ENCODE measurements at regions of chrX and their contacts with region 1.

Region 1: DNA sequence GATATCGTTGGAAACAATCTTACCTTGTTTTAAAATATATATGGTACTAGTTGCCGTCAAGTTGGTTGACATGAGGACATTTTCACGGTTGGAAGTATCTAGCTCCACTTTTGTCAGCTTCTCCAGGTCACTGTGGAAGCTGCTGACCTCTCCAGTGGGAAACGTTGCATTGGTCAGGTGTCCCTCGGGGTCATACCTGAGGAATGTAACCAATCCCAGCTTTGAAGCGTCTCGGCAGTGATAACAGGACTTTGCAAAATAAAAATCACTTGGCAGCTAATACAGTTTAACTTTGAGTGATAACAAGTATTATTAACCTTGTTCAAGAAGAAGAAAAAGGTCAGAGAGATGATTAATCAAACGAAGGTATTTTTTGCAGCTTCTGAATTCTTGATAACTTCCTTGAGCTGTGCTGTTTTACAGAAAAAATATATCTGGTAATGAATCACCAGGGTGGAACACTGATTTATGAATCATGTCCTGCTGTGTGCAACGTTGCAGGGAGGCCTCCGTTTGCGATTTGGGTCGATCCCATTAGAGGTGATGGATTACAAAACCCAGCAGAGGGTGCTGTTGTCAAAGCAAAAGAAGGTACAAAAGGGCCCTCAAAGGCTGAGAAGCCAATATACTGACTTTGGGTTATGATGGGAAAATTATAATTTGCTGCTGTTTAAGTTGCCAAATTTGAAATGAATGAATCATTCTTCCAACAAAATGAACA is 60.1 kb downstream of the SH2D1A start:
- DNase-seq: peak; percentile 36
- CTCF ChIP-seq: peak; percentile 44

Region 2: DNA sequence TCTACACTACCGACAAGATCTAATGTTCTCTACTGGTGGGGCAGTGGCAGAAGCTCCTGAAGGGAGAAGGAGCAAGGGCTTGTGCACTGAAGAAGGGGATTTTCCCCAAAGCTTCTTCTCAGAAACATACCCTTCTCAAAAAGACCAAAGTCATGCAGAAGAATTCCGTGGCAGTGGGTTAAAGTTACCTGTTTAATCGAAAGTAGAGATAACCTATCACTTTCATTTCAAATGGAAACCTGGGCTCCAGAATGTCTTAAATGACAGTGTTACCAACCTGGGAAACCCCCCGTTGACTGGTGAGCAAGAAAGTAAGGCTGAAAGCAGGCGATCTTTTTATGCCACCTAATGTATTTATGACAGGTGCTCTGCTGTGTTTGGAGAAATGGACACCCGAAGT is 166.5 kb before region 1 on chrX:
- CTCF ChIA-PET with region 1: no interaction called
- POLR2A ChIA-PET with region 1: no interaction called
- DNase-seq: peak; percentile 25
- CTCF ChIP-seq: no peak

Region 3: GRCh38 chrX:125132285-125132684 is 725.8 kb after region 1 on chrX:
- CTCF ChIA-PET with region 1: interaction called, 11 read pairs
- POLR2A ChIA-PET with region 1: no interaction called
- DNase-seq: peak; percentile 6
- CTCF ChIP-seq: peak; percentile 33